ENCODE measurements at regions of chr4 and their contacts with region 1.

Region 1: GRCh38 chr4:185134307-185134869 is 8.7 kb upstream of the SLC25A4 start:
- DNase-seq: no peak
- H3K4me3 ChIP-seq: no peak overlapping the region
- H3K27ac ChIP-seq: no peak overlapping the region
- H3K4me1 ChIP-seq: no peaks in the 10 kb centered on the region
- H3K27me3 ChIP-seq: no peaks in the 10 kb centered on the region
- CTCF ChIP-seq: peak; percentile 72 to 85 (median 80)
- POLR2A ChIP-seq: no peak

Region 2: DNA sequence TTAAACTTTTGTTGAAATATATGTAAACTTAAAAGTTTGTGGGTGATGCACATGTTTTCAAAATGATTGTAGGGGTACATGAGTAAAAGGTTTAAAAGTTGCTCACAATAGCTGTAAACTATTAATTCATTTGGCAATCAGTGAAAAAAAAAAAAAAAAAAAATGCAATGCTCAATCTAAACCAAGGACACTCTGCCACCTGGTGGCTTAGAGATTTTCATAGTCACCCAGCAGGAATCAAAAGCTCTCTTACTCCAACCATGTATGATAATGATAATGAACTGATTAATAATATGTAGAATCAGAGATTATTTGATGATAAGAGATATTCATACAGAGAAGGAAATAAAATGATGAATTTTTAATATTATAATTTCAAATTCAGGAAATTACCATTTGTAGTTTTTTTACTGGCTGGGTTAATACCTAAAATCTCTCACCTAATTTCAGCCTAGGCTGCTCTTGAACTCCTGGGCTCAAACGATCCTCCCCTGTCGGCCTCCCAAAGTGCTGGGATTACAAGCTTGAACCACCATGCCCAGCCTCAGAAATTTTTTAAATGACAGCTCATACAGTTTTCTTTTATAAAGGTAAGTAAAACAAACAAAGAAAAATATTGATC is 38.2 kb before region 1 on chr4:
- intact Hi-C with region 1: loop called in 1 of 2 experiments (anchors 5 kb)
- DNase-seq: peak in 5 of 7 donors; percentile 43 to 70 (median 50)
- H3K4me3 ChIP-seq: no peak overlapping the region
- H3K27ac ChIP-seq: no peak overlapping the region
- H3K4me1 ChIP-seq: no peaks in the 10 kb centered on the region
- H3K27me3 ChIP-seq: no peaks in the 10 kb centered on the region
- CTCF ChIP-seq: peak; percentile 42 to 79 (median 64)
- POLR2A ChIP-seq: no peak

Measured in adrenal gland (tissue), 19 donors.